Activated CD4-positive, alpha-beta memory T cell treated with anti-CD3 and anti-CD28 coated beads, Interleukin-2, amount 10 ng/mL, durations not matched to agents 7 days and 5 days (primary cell): ENCODE measurements at regions of chr9 and their contacts with region 1.

Region 1: GRCh38 chr9:36166101-36166927 is 2.9 kb upstream of the CCIN start:
- DNase-seq: peak; percentile 87
- H3K4me3 Mint-ChIP-seq: peak overlapping the region; percentile 66
- H3K27ac Mint-ChIP-seq: no peak overlapping the region
- H3K4me1 Mint-ChIP-seq: peaks cover 12% of the 10 kb centered on the region
- H3K27me3 Mint-ChIP-seq: peaks cover 14% of the 10 kb centered on the region

Region 2: DNA sequence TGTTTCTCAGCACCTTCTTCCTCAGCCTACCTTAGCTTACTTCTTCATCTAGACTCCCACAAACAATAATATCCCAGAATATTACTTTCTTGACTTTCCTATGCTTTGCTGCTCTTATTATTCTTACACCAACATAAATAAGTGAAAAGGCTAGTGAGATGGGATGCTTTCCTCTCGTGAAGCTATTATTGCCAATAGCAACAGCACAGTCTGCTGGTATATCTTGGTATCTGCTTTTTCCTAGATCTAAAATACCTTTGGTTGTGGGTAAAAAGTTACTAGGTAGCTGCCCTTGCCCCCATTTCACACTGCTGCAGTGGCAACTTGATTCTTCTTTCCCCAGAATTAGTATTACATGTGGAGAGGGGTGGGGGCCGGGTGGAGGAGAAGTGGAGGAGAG is 55.9 kb before region 1 on chr9:
- CTCF ChIA-PET with region 1: interaction called, 325 read pairs
- POLR2A ChIA-PET with region 1: interaction called, 5 read pairs
- DNase-seq: no peak
- H3K4me3 Mint-ChIP-seq: no peak overlapping the region
- H3K27ac Mint-ChIP-seq: no peak overlapping the region
- H3K4me1 Mint-ChIP-seq: no peaks in the 10 kb centered on the region
- H3K27me3 Mint-ChIP-seq: no peaks in the 10 kb centered on the region

Region 3: GRCh38 chr9:36136272-36136893 is 29.9 kb before region 1 on chr9 and contains the start of gene GLIPR2:
- CTCF ChIA-PET with region 1: interaction called, 18 read pairs
- POLR2A ChIA-PET with region 1: interaction called, 22 read pairs
- DNase-seq: peak; percentile 86
- H3K4me3 Mint-ChIP-seq: peak within 1 kb of the TSS; percentile 93
- H3K27ac Mint-ChIP-seq: peak within 1 kb of the TSS; percentile 70
- H3K4me1 Mint-ChIP-seq: peaks cover 52% of the 10 kb centered on the region
- H3K27me3 Mint-ChIP-seq: peaks cover 16% of the 10 kb centered on the region
- total RNA-seq, gene GLIPR2: 45.3 to 48.0 TPM

Region 4: GRCh38 chr9:36142510-36143244 is 23.6 kb before region 1 on chr9:
- CTCF ChIA-PET with region 1: interaction called, 12 read pairs
- POLR2A ChIA-PET with region 1: interaction called, 22 read pairs
- DNase-seq: no peak
- H3K4me3 Mint-ChIP-seq: peak overlapping the region; percentile 85
- H3K27ac Mint-ChIP-seq: peak overlapping the region; percentile 96
- H3K4me1 Mint-ChIP-seq: peaks cover 97% of the 10 kb centered on the region
- H3K27me3 Mint-ChIP-seq: peaks cover 3% of the 10 kb centered on the region

Region 5: GRCh38 chr9:36148311-36149051 is 17.8 kb before region 1 on chr9:
- CTCF ChIA-PET with region 1: interaction called, 30 read pairs
- POLR2A ChIA-PET with region 1: interaction called, 15 read pairs
- DNase-seq: peak; percentile 84
- H3K4me3 Mint-ChIP-seq: no peak overlapping the region
- H3K27ac Mint-ChIP-seq: peak overlapping the region; percentile 71
- H3K4me1 Mint-ChIP-seq: peaks cover 93% of the 10 kb centered on the region
- H3K27me3 Mint-ChIP-seq: peaks cover 3% of the 10 kb centered on the region

Region 6: GRCh38 chr9:36154331-36154952 is 11.9 kb before region 1 on chr9:
- CTCF ChIA-PET with region 1: interaction called, 30 read pairs
- POLR2A ChIA-PET with region 1: interaction called, 10 read pairs
- DNase-seq: no peak
- H3K4me3 Mint-ChIP-seq: no peak overlapping the region
- H3K27ac Mint-ChIP-seq: no peak overlapping the region
- H3K4me1 Mint-ChIP-seq: peaks cover 53% of the 10 kb centered on the region
- H3K27me3 Mint-ChIP-seq: no peaks in the 10 kb centered on the region